ENCODE measurements at regions of chr15 and their contacts with region 1.

Region 1: GRCh38 chr15:63752075-63752684 is 81.6 kb downstream of the HERC1 start:
- DNase-seq: peak in 1 of 5 donors; percentile 22
- H3K4me3 ChIP-seq: no peak overlapping the region
- H3K27ac ChIP-seq: no peak overlapping the region
- H3K4me1 ChIP-seq: no peaks in the 10 kb centered on the region
- H3K27me3 ChIP-seq: no peaks in the 10 kb centered on the region
- CTCF ChIP-seq: peak; percentile 34 to 76 (median 69)
- EP300 ChIP-seq: no peak
- POLR2A ChIP-seq: no peak

Region 2: GRCh38 chr15:63277038-63277892 is 474.9 kb before region 1 on chr15 and contains the start of gene APH1B:
- intact Hi-C with region 1: no loop called
- DNase-seq: peak; percentile 82 to 92 (median 88)
- H3K4me3 ChIP-seq: peak within 1 kb of the TSS; percentile 76
- H3K27ac ChIP-seq: peak within 1 kb of the TSS; percentile 90 to 94
- H3K4me1 ChIP-seq: peaks cover 5% of the 10 kb centered on the region
- H3K27me3 ChIP-seq: no peaks in the 10 kb centered on the region
- CTCF ChIP-seq: peak in 1 of 3 donors; percentile 19
- EP300 ChIP-seq: peak; percentile 14
- POLR2A ChIP-seq: peak; percentile 27
- total RNA-seq, gene APH1B: 13.2 to 25.2 (median 22.6) TPM

Region 3: GRCh38 chr15:63891079-63891767 is 139.0 kb after region 1 on chr15:
- intact Hi-C with region 1: loop called in 1 of 4 experiments (anchors 5 kb)
- DNase-seq: peak; percentile 39 to 81 (median 69)
- H3K4me3 ChIP-seq: no peak overlapping the region
- H3K27ac ChIP-seq: no peak overlapping the region
- H3K4me1 ChIP-seq: no peaks in the 10 kb centered on the region
- H3K27me3 ChIP-seq: no peaks in the 10 kb centered on the region
- CTCF ChIP-seq: peak; percentile 23 to 46 (median 44)
- EP300 ChIP-seq: no peak
- POLR2A ChIP-seq: no peak

Region 4: GRCh38 chr15:63950911-63951481 is 198.8 kb after region 1 on chr15:
- intact Hi-C with region 1: no loop called
- DNase-seq: no peak
- H3K4me3 ChIP-seq: no peak overlapping the region
- H3K27ac ChIP-seq: no peak overlapping the region
- H3K4me1 ChIP-seq: peaks cover 3% of the 10 kb centered on the region
- H3K27me3 ChIP-seq: no peaks in the 10 kb centered on the region
- CTCF ChIP-seq: no peak
- EP300 ChIP-seq: no peak
- POLR2A ChIP-seq: no peak

Region 5: DNA sequence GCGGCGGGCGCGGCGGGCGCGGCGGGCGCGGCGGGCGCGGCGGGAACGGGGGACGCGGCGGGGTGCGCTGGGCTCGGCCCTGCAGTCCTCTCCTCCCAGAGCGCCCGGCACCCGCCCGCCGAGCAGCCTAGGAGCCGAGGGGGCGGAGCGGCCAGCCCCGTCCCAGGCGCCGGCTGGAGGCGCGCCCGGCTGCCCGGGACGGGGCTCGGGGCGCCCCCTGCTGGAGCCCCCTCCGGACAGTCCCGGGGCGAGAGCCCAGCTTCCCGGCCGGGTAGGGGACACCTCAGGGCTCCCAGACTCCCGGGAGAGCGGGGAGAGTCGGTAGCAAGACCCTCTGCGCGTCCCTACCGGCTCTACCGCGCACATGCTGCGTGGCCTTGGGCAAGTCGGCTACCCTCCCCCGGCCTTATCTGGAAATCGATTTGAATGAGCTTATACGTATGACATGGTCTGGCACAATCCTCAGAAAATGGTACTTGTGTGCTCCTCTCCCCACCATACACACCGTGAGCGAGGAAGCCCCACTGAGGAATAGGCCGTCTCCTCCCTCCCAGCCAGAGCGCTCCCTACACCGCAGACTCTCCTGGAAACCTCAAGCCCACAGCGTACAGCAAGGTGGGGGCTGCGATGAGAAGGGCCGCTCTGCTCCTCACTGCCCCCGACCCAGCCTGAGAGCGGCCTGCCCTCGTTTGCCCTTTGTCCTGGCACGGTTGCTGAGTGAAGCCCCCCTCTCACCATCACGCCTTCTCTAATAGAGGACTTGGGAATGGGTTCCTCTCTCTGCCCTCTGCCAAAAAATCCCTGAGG is 294.4 kb after region 1 on chr15 and contains the start of gene DAPK2:
- intact Hi-C with region 1: loop called in 2 of 4 experiments (anchors 5 to 10 kb)
- DNase-seq: peak; percentile 45 to 77 (median 71)
- H3K4me3 ChIP-seq: peak within 1 kb of the TSS; percentile 56
- H3K27ac ChIP-seq: no peak within 1 kb of the TSS
- H3K4me1 ChIP-seq: peaks cover 13% of the 10 kb centered on the region
- H3K27me3 ChIP-seq: no peaks in the 10 kb centered on the region
- CTCF ChIP-seq: peak; percentile 33 to 68 (median 58)
- EP300 ChIP-seq: no peak
- POLR2A ChIP-seq: no peak
- total RNA-seq, gene DAPK2: 0.77 to 6.2 (median 1.7) TPM

Region 6: GRCh38 chr15:64067564-64068030 is 315.4 kb after region 1 on chr15:
- intact Hi-C with region 1: loop called in 1 of 4 experiments (anchors 5 kb)
- DNase-seq: peak; percentile 44 to 69 (median 66)
- H3K4me3 ChIP-seq: no peak overlapping the region
- H3K27ac ChIP-seq: no peak overlapping the region
- H3K4me1 ChIP-seq: peaks cover 7% of the 10 kb centered on the region
- H3K27me3 ChIP-seq: no peaks in the 10 kb centered on the region
- CTCF ChIP-seq: peak; percentile 67 to 71 (median 70)
- EP300 ChIP-seq: no peak
- POLR2A ChIP-seq: no peak